ENCODE measurements at regions of chr5 and their contacts with region 1.

Region 1: DNA sequence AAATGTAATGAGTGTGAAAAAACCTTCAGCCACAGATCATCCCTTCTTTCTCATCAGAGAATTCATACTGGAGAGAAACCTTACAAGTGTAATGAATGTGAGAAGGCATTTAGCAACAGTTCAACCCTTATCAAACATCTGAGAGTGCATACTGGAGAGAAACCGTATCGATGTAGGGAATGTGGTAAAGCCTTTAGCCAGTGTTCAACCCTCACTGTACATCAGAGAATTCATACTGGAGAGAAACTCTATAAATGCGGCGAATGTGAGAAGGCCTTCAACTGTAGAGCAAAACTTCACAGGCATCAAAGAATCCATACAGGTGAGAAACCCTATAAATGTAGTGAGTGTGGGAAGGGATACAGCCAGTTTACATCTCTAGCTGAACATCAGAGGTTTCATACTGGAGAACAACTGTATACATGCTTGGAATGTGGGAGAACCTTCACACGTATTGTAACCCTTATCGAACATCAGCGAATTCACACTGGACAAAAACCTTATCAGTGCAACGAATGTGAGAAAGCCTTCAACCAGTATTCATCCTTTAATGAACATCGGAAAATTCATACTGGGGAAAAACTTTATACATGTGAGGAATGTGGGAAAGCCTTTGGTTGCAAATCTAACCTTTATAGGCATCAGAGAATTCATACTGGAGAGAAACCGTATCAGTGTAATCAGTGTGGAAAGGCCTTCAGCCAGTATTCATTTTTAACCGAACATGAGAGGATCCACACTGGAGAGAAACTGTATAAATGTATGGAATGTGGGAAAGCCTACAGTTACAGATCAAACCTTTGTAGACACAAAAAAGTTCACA is 19.2 kb downstream of the ZNF354C start:
- DNase-seq: no peak
- H3K4me3 ChIP-seq: no peak overlapping the region
- H3K27ac ChIP-seq: no peak overlapping the region
- H3K4me1 ChIP-seq: no peaks in the 10 kb centered on the region
- H3K27me3 ChIP-seq: no peaks in the 10 kb centered on the region
- CTCF ChIP-seq: no peak

Region 2: GRCh38 chr5:178293400-178293799 is 786.0 kb before region 1 on chr5:
- intact Hi-C with region 1: loop called (anchors 10 kb)
- DNase-seq: peak; percentile 13 to 47
- H3K4me3 ChIP-seq: no peak overlapping the region
- H3K27ac ChIP-seq: no peak overlapping the region
- H3K4me1 ChIP-seq: peaks cover 0 to 8% (median 0%) of the 10 kb centered on the region in 4 donors
- H3K27me3 ChIP-seq: peaks cover 0 to 32% of the 10 kb centered on the region in 2 donors
- CTCF ChIP-seq: no peak

Measured in tibial artery (tissue), 4 donors.